SK-N-SH (cell line): ENCODE measurements at regions of chr3 and their contacts with region 1.

Region 1: DNA sequence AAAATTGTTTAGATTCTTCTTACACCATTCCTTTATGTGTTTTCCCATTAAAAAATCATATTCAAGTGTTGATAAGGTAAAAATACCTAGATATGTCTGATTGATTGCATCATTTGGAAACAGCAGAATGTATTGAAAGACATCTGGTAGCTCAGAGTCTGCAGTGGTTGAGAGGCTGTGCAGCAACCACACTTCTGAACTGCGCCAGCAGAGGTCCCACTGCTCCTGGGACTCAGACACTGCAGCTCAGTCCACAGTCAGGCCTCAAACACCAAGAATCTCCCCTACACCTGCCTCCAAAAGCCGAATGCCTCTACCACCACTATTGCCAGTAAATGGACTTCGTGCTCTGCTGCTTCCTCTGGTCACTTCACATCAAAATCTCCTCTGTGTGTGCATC is 176.9 kb upstream of the LMCD1 start:
- DNase-seq: peak; percentile 53
- H3K4me3 ChIP-seq: no peak overlapping the region
- H3K27ac ChIP-seq: no peak overlapping the region
- H3K4me1 ChIP-seq: peaks cover 0 to 14% of the 10 kb centered on the region in 2 experiments; a peak in 2 of 4 replicates
- H3K27me3 ChIP-seq: no peaks in the 10 kb centered on the region
- CTCF ChIP-seq: peak; percentile 49; the same call in 1 of the 2 replicates
- EP300 ChIP-seq: no peak
- RAD21 ChIP-seq: peak; percentile 60

Region 2: GRCh38 chr3:8416965-8417364 is 92.2 kb after region 1 on chr3:
- CTCF ChIA-PET with region 1: interaction called, 18 read pairs
- POLR2A ChIA-PET with region 1: no interaction called
- DNase-seq: no peak
- H3K4me3 ChIP-seq: 0 out of 4 replicates have a peak overlapping the region, but pooled peaks of 1 of the 2 experiments have one; percentile 30
- H3K27ac ChIP-seq: no peak overlapping the region
- H3K4me1 ChIP-seq: peaks cover 0 to 18% of the 10 kb centered on the region in 2 experiments; a peak in 2 of 4 replicates
- H3K27me3 ChIP-seq: no peaks in the 10 kb centered on the region
- CTCF ChIP-seq: no peak
- EP300 ChIP-seq: no peak
- RAD21 ChIP-seq: no peak

Region 3: GRCh38 chr3:8470801-8471200 is 146.1 kb after region 1 on chr3:
- CTCF ChIA-PET with region 1: no interaction called
- POLR2A ChIA-PET with region 1: no interaction called
- DNase-seq: no peak
- H3K4me3 ChIP-seq: no peak overlapping the region
- H3K27ac ChIP-seq: no peak overlapping the region
- H3K4me1 ChIP-seq: no peaks in the 10 kb centered on the region; a peak in 1 of 4 replicates
- H3K27me3 ChIP-seq: no peaks in the 10 kb centered on the region
- CTCF ChIP-seq: no peak
- EP300 ChIP-seq: no peak
- RAD21 ChIP-seq: no peak